Stomach (tissue), 19 donors: ENCODE measurements at regions of chr9 and their contacts with region 1.

Region 1: GRCh38 chr9:132235946-132236661 is 74.2 kb downstream of the NTNG2 start:
- DNase-seq: peak; percentile 87 to 91
- H3K4me3 ChIP-seq: no peak overlapping the region
- H3K27ac ChIP-seq: no peak overlapping the region
- H3K4me1 ChIP-seq: peaks cover 0 to 21% (median 17%) of the 10 kb centered on the region in 4 donors
- H3K27me3 ChIP-seq: peaks cover 0 to 42% (median 9%) of the 10 kb centered on the region in 3 donors
- CTCF ChIP-seq: peak in 5 of 7 experiments; percentile 69 to 93 (median 80)
- EP300 ChIP-seq: no peak
- POLR2A ChIP-seq: no peak

Region 2: DNA sequence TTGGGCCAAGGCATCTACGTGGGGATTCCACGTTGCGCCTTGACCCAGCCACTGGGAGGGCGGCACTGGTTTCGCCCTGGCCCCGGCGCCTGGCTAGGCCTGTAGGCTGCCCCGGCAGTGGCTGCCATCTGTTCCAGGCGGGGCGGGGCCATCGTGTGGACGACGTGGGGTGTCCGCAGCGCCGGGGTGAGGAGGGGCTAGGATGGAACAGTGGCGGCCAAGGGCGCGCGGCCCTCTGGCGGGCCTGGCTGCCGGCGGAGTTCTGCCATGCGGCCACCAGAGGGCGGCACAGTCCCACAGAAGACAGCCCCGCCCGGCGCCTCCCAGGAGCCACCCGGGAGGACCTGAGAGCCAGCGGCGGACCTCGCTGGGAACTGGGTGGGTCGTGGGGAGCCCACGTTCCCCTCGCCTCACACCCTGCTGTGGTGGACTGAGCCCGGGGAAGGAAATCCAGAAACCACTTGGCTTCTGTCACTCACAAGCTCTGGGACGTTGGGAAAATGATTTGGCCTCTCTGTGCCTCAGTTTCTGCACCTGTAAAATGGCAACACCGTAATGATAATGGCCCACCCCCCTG is 473.7 kb before region 1 on chr9:
- intact Hi-C with region 1: loop called (anchors 5 kb)
- DNase-seq: peak; percentile 84 to 90
- H3K4me3 ChIP-seq: no peak overlapping the region
- H3K27ac ChIP-seq: no peak overlapping the region
- H3K4me1 ChIP-seq: peaks cover 0 to 9% (median 7%) of the 10 kb centered on the region in 4 donors
- H3K27me3 ChIP-seq: peaks cover 0 to 54% (median 5%) of the 10 kb centered on the region in 3 donors
- CTCF ChIP-seq: peak in 5 of 7 experiments; percentile 86 to 98 (median 89)
- EP300 ChIP-seq: no peak
- POLR2A ChIP-seq: no peak

Region 3: GRCh38 chr9:132125944-132126720 is 110.0 kb before region 1 on chr9:
- intact Hi-C with region 1: no loop called
- DNase-seq: no peak
- H3K4me3 ChIP-seq: no peak overlapping the region
- H3K27ac ChIP-seq: no peak overlapping the region
- H3K4me1 ChIP-seq: peaks cover 0 to 4% (median 0%) of the 10 kb centered on the region in 4 donors
- H3K27me3 ChIP-seq: peaks cover 2 to 90% (median 44%) of the 10 kb centered on the region in 3 donors
- CTCF ChIP-seq: no peak
- EP300 ChIP-seq: no peak
- POLR2A ChIP-seq: no peak

Region 4: DNA sequence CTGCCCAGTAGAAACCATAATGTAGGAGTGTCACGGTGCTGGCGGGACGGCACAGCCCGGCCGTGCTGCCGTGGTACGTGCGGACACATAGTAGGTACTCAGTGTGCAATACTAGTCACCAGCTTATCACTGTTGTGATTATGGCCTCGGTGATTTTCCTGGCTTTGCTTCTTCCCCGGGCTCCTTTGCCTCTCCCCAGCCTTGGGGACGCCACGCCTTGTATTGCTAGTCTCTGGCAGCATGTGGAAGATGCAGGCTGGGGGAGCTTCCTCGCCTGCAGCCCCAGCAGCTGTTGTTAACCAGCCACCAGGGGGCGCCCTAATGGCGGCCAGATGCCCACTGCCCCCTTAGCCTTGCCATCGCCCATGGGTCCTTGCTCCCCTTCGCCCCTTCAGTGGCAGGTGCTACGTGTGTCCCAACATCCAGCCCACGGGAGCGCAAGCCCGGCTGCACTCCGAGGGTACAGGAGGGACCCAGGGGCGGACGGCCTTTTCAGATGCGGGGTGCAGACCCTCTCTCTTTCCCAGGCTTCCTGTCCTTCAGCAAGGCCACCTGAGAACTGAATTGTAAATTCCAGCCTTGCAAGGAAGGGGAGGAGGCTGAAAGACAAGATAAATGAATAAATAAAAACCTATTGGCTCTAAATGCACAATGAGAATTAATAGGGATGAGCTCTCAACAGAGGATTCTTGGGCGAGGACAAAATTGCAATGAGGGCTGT is 66.3 kb before region 1 on chr9:
- intact Hi-C with region 1: loop called (anchors 5 kb)
- DNase-seq: peak; percentile 59 to 80
- H3K4me3 ChIP-seq: no peak overlapping the region
- H3K27ac ChIP-seq: no peak overlapping the region
- H3K4me1 ChIP-seq: peaks cover 0 to 2% (median under 1%) of the 10 kb centered on the region in 4 donors
- H3K27me3 ChIP-seq: peaks cover 4 to 76% (median 55%) of the 10 kb centered on the region in 3 donors
- CTCF ChIP-seq: peak in 5 of 7 experiments; percentile 48 to 73 (median 63)
- EP300 ChIP-seq: no peak
- POLR2A ChIP-seq: no peak